ENCODE measurements at regions of chr15 and their contacts with region 1.

Region 1: DNA sequence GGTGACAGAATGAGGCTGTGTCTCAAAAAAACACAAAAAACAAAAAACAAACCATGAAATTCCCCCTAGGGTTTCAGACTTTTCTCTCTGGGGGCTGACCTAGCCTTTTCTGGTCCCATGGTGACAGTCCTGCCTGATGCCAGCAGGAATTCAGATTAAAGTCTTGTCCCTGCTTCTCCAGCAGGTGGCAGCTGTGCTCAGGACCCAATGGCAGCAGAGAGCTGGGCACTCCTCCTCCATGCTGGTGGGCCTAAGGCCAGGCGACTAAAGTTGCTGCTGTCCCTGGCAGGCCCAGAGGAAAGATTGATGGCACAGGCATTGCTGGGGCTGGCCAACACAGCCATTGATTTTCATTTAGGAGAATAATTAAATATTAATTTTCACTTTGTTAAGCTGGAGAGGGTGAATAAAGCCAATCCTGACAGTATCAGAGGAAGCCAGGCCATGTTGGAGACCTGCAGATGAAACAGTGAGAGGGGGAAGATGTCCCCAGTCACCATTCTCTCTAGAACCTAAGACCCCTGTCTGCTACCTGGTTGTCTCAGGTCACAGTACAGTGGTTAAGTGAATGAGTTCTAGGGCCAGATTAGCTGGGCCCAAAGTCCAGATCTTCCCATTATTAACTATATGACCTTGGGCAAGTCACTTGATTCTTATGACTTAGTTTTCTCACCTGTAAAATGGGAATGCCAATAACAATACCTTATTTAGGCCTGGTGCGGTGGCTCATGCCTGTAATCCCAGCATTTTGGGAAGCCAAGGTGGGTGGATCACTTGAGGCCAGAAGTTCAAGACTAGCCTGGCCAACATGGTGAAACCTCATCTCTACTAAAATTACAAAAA is 7.1 kb downstream of the CELF6 start:
- DNase-seq: peak; percentile 67 to 73
- H3K4me3 ChIP-seq: no peak overlapping the region
- H3K4me3 Mint-ChIP-seq: no peak overlapping the region
- H3K27ac Mint-ChIP-seq: no peak overlapping the region
- H3K4me1 ChIP-seq: no peaks in the 10 kb centered on the region
- H3K4me1 Mint-ChIP-seq: no peaks in the 10 kb centered on the region
- H3K27me3 ChIP-seq: no peaks in the 10 kb centered on the region
- H3K27me3 Mint-ChIP-seq: peaks cover 21% of the 10 kb centered on the region
- CTCF ChIP-seq: peak; percentile 65 to 73

Region 2: DNA sequence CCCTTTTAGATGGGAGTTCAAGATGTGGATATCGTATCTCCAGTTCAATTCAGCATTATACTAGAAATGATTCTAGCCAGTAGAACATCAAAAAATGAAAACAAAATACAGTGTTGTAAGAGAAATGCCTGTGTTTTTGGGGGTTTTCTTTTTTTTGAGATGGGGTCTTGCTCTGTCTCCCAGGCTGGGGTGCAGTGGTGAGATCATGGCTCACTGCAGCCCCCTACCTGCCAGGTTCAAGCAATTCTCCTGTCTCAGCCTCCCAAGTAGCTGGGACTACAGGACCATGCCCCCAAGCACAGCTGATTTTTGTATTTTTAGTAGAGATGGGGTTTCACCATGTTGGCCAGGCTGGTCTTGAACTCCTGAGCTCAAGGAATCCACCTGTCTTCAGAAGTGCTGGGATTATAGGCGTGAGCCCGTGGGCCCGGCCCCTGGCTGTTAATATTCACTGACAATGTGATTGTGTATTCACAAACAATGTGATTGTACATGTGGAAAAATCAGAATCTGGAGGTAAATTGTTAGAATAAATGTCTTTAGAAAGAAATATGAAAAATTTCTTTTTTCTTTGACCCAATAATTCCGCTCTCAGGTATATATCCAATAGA is 220.3 kb after region 1 on chr15:
- CTCF ChIA-PET with region 1: no interaction called
- POLR2A ChIA-PET with region 1: interaction called, 6 read pairs
- intact Hi-C with region 1: loop called (anchors 10 kb)
- DNase-seq: peak in 1 of 2 experiments; percentile 10
- H3K4me3 ChIP-seq: no peak overlapping the region
- H3K4me3 Mint-ChIP-seq: no peak overlapping the region
- H3K27ac Mint-ChIP-seq: no peak overlapping the region
- H3K4me1 ChIP-seq: no peaks in the 10 kb centered on the region
- H3K4me1 Mint-ChIP-seq: no peaks in the 10 kb centered on the region
- H3K27me3 ChIP-seq: no peaks in the 10 kb centered on the region
- H3K27me3 Mint-ChIP-seq: no peaks in the 10 kb centered on the region
- CTCF ChIP-seq: peak; percentile 29 to 37